ENCODE measurements at regions of chr17 and their contacts with region 1.

Region 1: GRCh38 chr17:3636154-3636907 is at the starts of genes CTNS and SHPK:
- DNase-seq: peak; percentile 90 to 95 (median 95)
- ATAC-seq: peak; percentile 98
- H3K4me3 ChIP-seq: peak within 1 kb of the TSS; percentile 97
- H3K4me3 Mint-ChIP-seq: peak within 1 kb of the TSS; percentile 86 to 99 (median 98)
- H3K27ac ChIP-seq: peak within 1 kb of the TSS; percentile 98
- H3K27ac Mint-ChIP-seq: peak within 1 kb of the TSS; percentile 96 to 100 (median 99)
- H3K4me1 ChIP-seq: peaks cover 0 to 3% of the 10 kb centered on the region in 2 donors
- H3K4me1 Mint-ChIP-seq: peaks cover 17 to 45% (median 29%) of the 10 kb centered on the region in 7 donors
- H3K27me3 ChIP-seq: no peaks in the 10 kb centered on the region
- H3K27me3 Mint-ChIP-seq: no peaks in the 10 kb centered on the region
- total RNA-seq, gene CTNS: 4.7 to 15.2 (median 8.8) TPM
- total RNA-seq, gene SHPK: 6.3 to 11.2 (median 10.8) TPM

Region 2: GRCh38 chr17:2592971-2593820 is 1043.1 kb before region 1 on chr17 and contains the start of gene PAFAH1B1:
- CTCF ChIA-PET with region 1: no interaction called
- POLR2A ChIA-PET with region 1: no interaction called
- intact Hi-C with region 1: loop called in 1 of 2 experiments (anchors 10 kb)
- DNase-seq: peak; percentile 94 to 99 (median 97)
- ATAC-seq: peak; percentile 90
- H3K4me3 ChIP-seq: peak within 1 kb of the TSS; percentile 69
- H3K4me3 Mint-ChIP-seq: peak within 1 kb of the TSS; percentile 87 to 97 (median 92)
- H3K27ac ChIP-seq: peak within 1 kb of the TSS; percentile 90
- H3K27ac Mint-ChIP-seq: peak within 1 kb of the TSS; percentile 85 to 96 (median 92)
- H3K4me1 ChIP-seq: peaks cover 23 to 31% of the 10 kb centered on the region in 2 donors
- H3K4me1 Mint-ChIP-seq: peaks cover 20 to 38% (median 28%) of the 10 kb centered on the region in 7 donors
- H3K27me3 ChIP-seq: no peaks in the 10 kb centered on the region
- H3K27me3 Mint-ChIP-seq: peaks cover 0 to 6% (median 0%) of the 10 kb centered on the region in 5 donors
- total RNA-seq, gene PAFAH1B1: 112 to 156 (median 140) TPM

Region 3: GRCh38 chr17:3415610-3416009 is 220.7 kb before region 1 on chr17:
- CTCF ChIA-PET with region 1: no interaction called
- POLR2A ChIA-PET with region 1: no interaction called
- intact Hi-C with region 1: no loop called
- DNase-seq: no peak
- ATAC-seq: no peak
- H3K4me3 ChIP-seq: no peak overlapping the region
- H3K4me3 Mint-ChIP-seq: no peak overlapping the region
- H3K27ac ChIP-seq: no peak overlapping the region
- H3K27ac Mint-ChIP-seq: no peak overlapping the region
- H3K4me1 ChIP-seq: no peaks in the 10 kb centered on the region
- H3K4me1 Mint-ChIP-seq: peaks cover 0 to 2% (median 0%) of the 10 kb centered on the region in 7 donors
- H3K27me3 ChIP-seq: peaks cover 0 to 3% of the 10 kb centered on the region in 2 donors
- H3K27me3 Mint-ChIP-seq: peaks cover 11 to 26% (median 24%) of the 10 kb centered on the region in 5 donors

Region 4: DNA sequence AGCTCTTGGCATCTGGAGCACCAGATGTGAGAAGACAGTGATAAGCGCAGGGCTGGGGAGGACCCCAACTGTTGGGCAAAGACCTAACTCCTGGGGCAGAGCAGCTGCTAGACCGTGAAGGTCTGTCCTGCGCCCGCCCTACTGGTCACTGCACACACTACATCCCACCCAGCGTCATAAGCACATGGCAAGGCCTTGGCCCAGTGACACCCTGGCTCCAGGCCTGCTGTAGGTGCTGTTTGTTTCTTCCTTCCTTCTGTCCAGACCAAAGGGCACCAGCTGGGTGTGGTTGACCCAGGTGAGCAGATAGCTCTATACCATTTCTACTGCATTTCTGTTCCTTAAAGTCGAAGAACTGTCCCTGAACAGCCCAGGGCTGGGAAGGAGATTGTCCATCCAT is 85.1 kb before region 1 on chr17:
- CTCF ChIA-PET with region 1: no interaction called
- POLR2A ChIA-PET with region 1: no interaction called
- intact Hi-C with region 1: no loop called
- DNase-seq: no peak
- ATAC-seq: no peak
- H3K4me3 ChIP-seq: no peak overlapping the region
- H3K4me3 Mint-ChIP-seq: no peak overlapping the region
- H3K27ac ChIP-seq: no peak overlapping the region
- H3K27ac Mint-ChIP-seq: no peak overlapping the region
- H3K4me1 ChIP-seq: no peaks in the 10 kb centered on the region
- H3K4me1 Mint-ChIP-seq: peaks cover 0 to 3% (median 0%) of the 10 kb centered on the region in 7 donors
- H3K27me3 ChIP-seq: no peaks in the 10 kb centered on the region
- H3K27me3 Mint-ChIP-seq: peaks cover 0 to 25% (median 14%) of the 10 kb centered on the region in 5 donors

Region 5: GRCh38 chr17:3668279-3669085 is 32.2 kb after region 1 on chr17 and contains the starts of genes EMC6 and TAX1BP3:
- CTCF ChIA-PET with region 1: no interaction called
- POLR2A ChIA-PET with region 1: interaction called, 7 read pairs
- intact Hi-C with region 1: loop called (anchors 1 kb)
- DNase-seq: peak; percentile 97 to 100 (median 100)
- ATAC-seq: peak; percentile 96
- H3K4me3 ChIP-seq: peak within 1 kb of the TSS; percentile 91
- H3K4me3 Mint-ChIP-seq: peak within 1 kb of the TSS; percentile 82 to 94 (median 91)
- H3K27ac ChIP-seq: peak within 1 kb of the TSS; percentile 76
- H3K27ac Mint-ChIP-seq: peak within 1 kb of the TSS; percentile 63 to 93 (median 85)
- H3K4me1 ChIP-seq: peaks cover 8 to 17% of the 10 kb centered on the region in 2 donors
- H3K4me1 Mint-ChIP-seq: peaks cover 21 to 43% (median 30%) of the 10 kb centered on the region in 7 donors
- H3K27me3 ChIP-seq: no peaks in the 10 kb centered on the region
- H3K27me3 Mint-ChIP-seq: peaks cover 0 to 2% (median 0%) of the 10 kb centered on the region in 5 donors
- total RNA-seq, gene EMC6: 23.1 to 39.0 (median 31.2) TPM
- total RNA-seq, gene TAX1BP3: 10.5 to 28.4 (median 11.7) TPM

Region 6: GRCh38 chr17:3845621-3846441 is 209.5 kb after region 1 on chr17 and contains the start of gene NCBP3:
- CTCF ChIA-PET with region 1: no interaction called
- POLR2A ChIA-PET with region 1: no interaction called
- intact Hi-C with region 1: loop called in 1 of 2 experiments (anchors 1 kb)
- DNase-seq: peak; percentile 79 to 98 (median 90)
- ATAC-seq: peak; percentile 98
- H3K4me3 ChIP-seq: peak within 1 kb of the TSS; percentile 83
- H3K4me3 Mint-ChIP-seq: peak within 1 kb of the TSS; percentile 85 to 98 (median 90)
- H3K27ac ChIP-seq: peak within 1 kb of the TSS; percentile 90
- H3K27ac Mint-ChIP-seq: peak within 1 kb of the TSS; percentile 59 to 95 (median 88)
- H3K4me1 ChIP-seq: peaks cover 12 to 17% of the 10 kb centered on the region in 2 donors
- H3K4me1 Mint-ChIP-seq: peaks cover 18 to 33% (median 24%) of the 10 kb centered on the region in 7 donors
- H3K27me3 ChIP-seq: no peaks in the 10 kb centered on the region
- H3K27me3 Mint-ChIP-seq: peaks cover 0 to 13% (median 0%) of the 10 kb centered on the region in 5 donors
- total RNA-seq, gene NCBP3: 40.6 to 49.4 (median 46.7) TPM

Region 7: GRCh38 chr17:3965118-3965803 is 328.9 kb after region 1 on chr17:
- CTCF ChIA-PET with region 1: interaction called, 3 read pairs
- POLR2A ChIA-PET with region 1: interaction called, 3 read pairs
- intact Hi-C with region 1: loop called in 1 of 2 experiments (anchors 2 kb)
- DNase-seq: peak; percentile 37 to 71 (median 66)
- ATAC-seq: peak; percentile 64
- H3K4me3 ChIP-seq: peak overlapping the region; percentile 69
- H3K4me3 Mint-ChIP-seq: peak overlapping the region; percentile 88 to 96 (median 94)
- H3K27ac ChIP-seq: peak overlapping the region; percentile 75
- H3K27ac Mint-ChIP-seq: peak overlapping the region; percentile 82 to 97 (median 94)
- H3K4me1 ChIP-seq: peaks cover 31 to 36% of the 10 kb centered on the region in 2 donors
- H3K4me1 Mint-ChIP-seq: peaks cover 34 to 50% (median 44%) of the 10 kb centered on the region in 7 donors
- H3K27me3 ChIP-seq: no peaks in the 10 kb centered on the region
- H3K27me3 Mint-ChIP-seq: peaks cover 0 to 4% (median 0%) of the 10 kb centered on the region in 5 donors

Measured in naive thymus-derived CD4-positive, alpha-beta T cell (primary cell).